ENCODE measurements at regions of chr9 and their contacts with region 1.

Region 1: DNA sequence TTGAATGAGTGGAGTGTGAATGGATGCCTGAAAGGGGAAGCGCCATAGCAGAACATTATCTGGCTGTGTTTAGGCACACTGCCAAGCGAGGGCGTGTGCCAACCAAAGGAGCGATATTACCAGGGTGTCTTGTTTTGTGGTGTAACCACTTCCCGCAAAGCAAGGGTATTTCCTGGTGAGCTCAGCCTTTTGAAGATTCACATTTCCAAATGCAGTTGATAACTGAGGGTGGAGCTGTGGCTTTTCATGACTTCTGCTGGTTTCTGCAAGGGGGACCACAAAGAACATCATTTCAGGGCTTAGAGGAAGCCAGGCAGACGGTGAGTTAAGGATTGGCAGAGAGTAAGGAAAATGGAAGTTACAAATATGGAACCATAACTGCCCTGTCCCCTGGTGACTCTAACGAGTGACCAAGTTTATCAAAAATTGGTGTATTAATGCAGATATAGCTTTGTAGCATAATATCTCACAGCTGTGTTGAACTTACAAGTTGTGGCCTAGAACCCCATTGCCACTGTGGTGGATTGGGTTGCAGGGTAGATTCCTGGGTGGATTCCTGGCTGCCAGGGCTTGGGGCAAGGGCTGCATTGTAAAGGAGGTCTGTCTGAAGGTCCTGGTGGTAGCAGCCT is 71.4 kb downstream of the RALGPS1 start:
- DNase-seq: peak; percentile 93
- ATAC-seq: peak; percentile 71
- H3K4me3 Mint-ChIP-seq: peak overlapping the region; percentile 42
- H3K27ac Mint-ChIP-seq: peak overlapping the region; percentile 85
- H3K4me1 Mint-ChIP-seq: peaks cover 59% of the 10 kb centered on the region
- H3K27me3 Mint-ChIP-seq: peaks cover 18% of the 10 kb centered on the region

Region 2: GRCh38 chr9:127004946-127005769 is 19.2 kb after region 1 on chr9:
- CTCF ChIA-PET with region 1: interaction called, 20 read pairs
- DNase-seq: peak; percentile 89
- ATAC-seq: peak; percentile 99
- H3K4me3 Mint-ChIP-seq: no peak overlapping the region
- H3K27ac Mint-ChIP-seq: peak overlapping the region; percentile 84
- H3K4me1 Mint-ChIP-seq: peaks cover 30% of the 10 kb centered on the region
- H3K27me3 Mint-ChIP-seq: peaks cover under 1% of the 10 kb centered on the region

Region 3: DNA sequence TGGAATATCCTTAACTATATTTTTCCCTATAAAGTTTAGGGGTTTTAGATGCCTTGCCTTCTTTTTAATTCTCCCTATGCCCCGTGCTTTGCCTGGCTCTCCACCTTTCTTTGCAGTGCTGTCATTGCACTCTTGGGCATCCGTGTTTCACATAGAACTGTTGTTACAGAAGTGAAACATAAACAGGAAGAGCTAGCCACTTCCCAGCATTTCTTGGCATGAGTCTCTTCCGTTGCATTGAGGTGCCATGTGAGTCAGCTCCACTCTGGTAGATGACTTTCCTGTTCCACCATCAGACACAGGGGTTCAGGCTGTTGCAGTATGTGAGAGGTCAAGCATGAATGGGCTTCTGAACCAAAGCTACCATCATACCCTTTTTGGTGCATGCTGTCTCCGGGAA is 63.1 kb after region 1 on chr9:
- CTCF ChIA-PET with region 1: interaction called, 11 read pairs
- DNase-seq: peak; percentile 75
- ATAC-seq: peak; percentile 90
- H3K4me3 Mint-ChIP-seq: peak overlapping the region; percentile 59
- H3K27ac Mint-ChIP-seq: peak overlapping the region; percentile 65
- H3K4me1 Mint-ChIP-seq: peaks cover 30% of the 10 kb centered on the region
- H3K27me3 Mint-ChIP-seq: no peaks in the 10 kb centered on the region

Region 4: GRCh38 chr9:127177236-127177635 is 191.3 kb after region 1 on chr9:
- CTCF ChIA-PET with region 1: no interaction called
- DNase-seq: no peak
- ATAC-seq: no peak
- H3K4me3 Mint-ChIP-seq: no peak overlapping the region
- H3K27ac Mint-ChIP-seq: no peak overlapping the region
- H3K4me1 Mint-ChIP-seq: no peaks in the 10 kb centered on the region
- H3K27me3 Mint-ChIP-seq: no peaks in the 10 kb centered on the region

Measured in activated CD8-positive, alpha-beta memory T cell treated with anti-CD3 and anti-CD28 coated beads, Interleukin-2, amount 10 ng/mL, durations not matched to agents 7 days and 5 days (primary cell).